Mammary epithelial cell (primary cell): ENCODE measurements at regions of chr1 and their contacts with region 1.

Region 1: GRCh38 chr1:174982971-174983689 is 16.6 kb upstream of the CACYBP start:
- DNase-seq: peak; percentile 35
- H3K4me3 ChIP-seq: no peak overlapping the region
- H3K27ac ChIP-seq: no peak overlapping the region
- H3K4me1 ChIP-seq: no peaks in the 10 kb centered on the region
- H3K27me3 ChIP-seq: no peaks in the 10 kb centered on the region
- CTCF ChIP-seq: peak; percentile 55 to 69

Region 2: GRCh38 chr1:174769961-174770549 is 213.1 kb before region 1 on chr1:
- CTCF ChIA-PET with region 1: interaction called, 3 read pairs
- dilution Hi-C with region 1: no loop called
- in situ Hi-C with region 1: loop called (anchors 5 kb)
- intact Hi-C with region 1: loop called (anchors 1 kb)
- DNase-seq: peak; percentile 34
- H3K4me3 ChIP-seq: no peak overlapping the region
- H3K27ac ChIP-seq: no peak overlapping the region
- H3K4me1 ChIP-seq: no peaks in the 10 kb centered on the region
- H3K27me3 ChIP-seq: no peaks in the 10 kb centered on the region
- CTCF ChIP-seq: peak; percentile 68 to 72

Region 3: DNA sequence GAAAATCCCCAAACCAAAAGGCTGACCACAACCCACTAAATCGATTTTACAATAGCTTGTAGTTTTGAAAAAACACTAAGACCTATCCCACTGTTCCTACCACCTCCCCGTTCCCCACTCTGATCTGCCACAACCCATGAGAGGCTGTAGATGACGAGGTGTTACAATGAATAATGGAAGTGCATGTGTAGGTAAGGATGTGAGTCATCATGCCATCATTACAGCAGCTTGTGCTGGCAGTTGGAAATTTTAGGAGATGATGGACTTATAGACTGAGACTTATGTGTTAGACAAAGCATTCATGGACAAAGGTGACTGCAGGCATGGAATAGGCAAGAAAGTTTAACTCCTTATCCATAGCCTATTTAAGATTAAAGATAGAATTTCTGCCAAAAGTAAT is 168.1 kb before region 1 on chr1:
- CTCF ChIA-PET with region 1: interaction called, 31 read pairs
- dilution Hi-C with region 1: no loop called
- in situ Hi-C with region 1: no loop called
- intact Hi-C with region 1: no loop called
- DNase-seq: peak; percentile 92
- H3K4me3 ChIP-seq: no peak overlapping the region
- H3K27ac ChIP-seq: peak overlapping the region; percentile 52
- H3K4me1 ChIP-seq: peaks cover 48% of the 10 kb centered on the region
- H3K27me3 ChIP-seq: no peaks in the 10 kb centered on the region
- CTCF ChIP-seq: no peak

Region 4: GRCh38 chr1:174883409-174883808 is 99.7 kb before region 1 on chr1:
- CTCF ChIA-PET with region 1: no interaction called
- dilution Hi-C with region 1: no loop called
- in situ Hi-C with region 1: no loop called
- intact Hi-C with region 1: loop called (anchors 2 kb)
- DNase-seq: peak; percentile 50
- H3K4me3 ChIP-seq: no peak overlapping the region
- H3K27ac ChIP-seq: no peak overlapping the region
- H3K4me1 ChIP-seq: no peaks in the 10 kb centered on the region
- H3K27me3 ChIP-seq: no peaks in the 10 kb centered on the region
- CTCF ChIP-seq: no peak

Region 5: GRCh38 chr1:174942547-174943255 is 40.4 kb before region 1 on chr1:
- CTCF ChIA-PET with region 1: no interaction called
- dilution Hi-C with region 1: no loop called
- in situ Hi-C with region 1: no loop called
- intact Hi-C with region 1: no loop called
- DNase-seq: no peak
- H3K4me3 ChIP-seq: no peak overlapping the region
- H3K27ac ChIP-seq: no peak overlapping the region
- H3K4me1 ChIP-seq: no peaks in the 10 kb centered on the region
- H3K27me3 ChIP-seq: no peaks in the 10 kb centered on the region
- CTCF ChIP-seq: no peak